CD8-positive, alpha-beta T cell (primary cell): ENCODE measurements at regions of chr22 and their contacts with region 1.

Region 1: GRCh38 chr22:22787786-22788459 is 99.7 kb upstream of the IGLL5 start:
- DNase-seq: peak; percentile 35 to 86 (median 75)
- ATAC-seq: peak; percentile 80
- H3K4me3 ChIP-seq: no peak overlapping the region
- H3K4me3 Mint-ChIP-seq: no peak overlapping the region
- H3K27ac ChIP-seq: peak overlapping the region in 1 of 2 experiments; percentile 69
- H3K27ac Mint-ChIP-seq: peak overlapping the region; percentile 85
- H3K4me1 ChIP-seq: peaks cover 38% of the 10 kb centered on the region
- H3K4me1 Mint-ChIP-seq: peaks cover 54% of the 10 kb centered on the region
- H3K27me3 ChIP-seq: no peaks in the 10 kb centered on the region
- H3K27me3 Mint-ChIP-seq: no peaks in the 10 kb centered on the region
- CTCF ChIP-seq: peak; percentile 78

Region 2: DNA sequence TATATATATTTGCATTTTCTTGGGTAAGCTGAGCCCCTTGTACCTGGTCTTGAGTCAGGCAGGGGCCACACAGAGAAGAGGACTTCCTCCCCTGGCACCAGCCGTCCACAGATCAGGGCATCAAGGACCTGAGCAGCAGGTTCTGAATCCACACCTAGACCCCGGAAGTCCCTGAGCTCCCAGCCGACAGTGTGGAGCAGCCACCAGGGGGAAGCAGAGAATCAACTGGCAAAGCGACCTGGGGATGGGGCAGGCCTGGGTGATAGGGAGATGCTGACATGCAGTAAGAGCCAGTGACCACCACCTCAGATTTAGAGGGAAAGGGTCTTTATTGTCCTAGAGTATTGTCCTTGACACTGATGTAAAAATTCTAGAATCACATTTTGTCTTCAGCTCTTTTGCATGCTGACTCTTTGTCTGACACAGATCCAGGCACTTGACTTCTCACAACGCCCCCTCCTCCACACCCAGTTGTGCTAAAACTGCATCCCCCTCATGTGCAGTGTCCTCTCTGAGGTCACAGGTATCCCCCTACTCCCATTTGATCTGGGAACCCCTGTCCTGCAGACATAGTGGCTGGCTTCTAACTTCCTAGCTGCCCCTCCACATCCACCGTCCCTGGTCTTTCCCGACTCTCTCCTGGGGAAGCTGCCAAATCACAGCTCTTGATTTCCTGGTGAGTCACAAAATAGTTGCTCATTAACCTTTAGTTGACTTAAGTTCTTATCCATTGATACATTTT is 34.2 kb before region 1 on chr22:
- CTCF ChIA-PET with region 1: interaction called, 153 read pairs
- POLR2A ChIA-PET with region 1: interaction called, 10 read pairs
- intact Hi-C with region 1: loop called in 1 of 2 experiments (anchors 5 kb)
- DNase-seq: peak; percentile 63 to 90 (median 83)
- ATAC-seq: peak; percentile 85
- H3K4me3 ChIP-seq: peak overlapping the region in 1 of 2 experiments; percentile 25
- H3K4me3 Mint-ChIP-seq: peak overlapping the region; percentile 60
- H3K27ac ChIP-seq: peak overlapping the region; percentile 44 to 69
- H3K27ac Mint-ChIP-seq: peak overlapping the region; percentile 94
- H3K4me1 ChIP-seq: peaks cover 44% of the 10 kb centered on the region
- H3K4me1 Mint-ChIP-seq: peaks cover 66% of the 10 kb centered on the region
- H3K27me3 ChIP-seq: no peaks in the 10 kb centered on the region
- H3K27me3 Mint-ChIP-seq: no peaks in the 10 kb centered on the region
- CTCF ChIP-seq: peak; percentile 70

Region 3: DNA sequence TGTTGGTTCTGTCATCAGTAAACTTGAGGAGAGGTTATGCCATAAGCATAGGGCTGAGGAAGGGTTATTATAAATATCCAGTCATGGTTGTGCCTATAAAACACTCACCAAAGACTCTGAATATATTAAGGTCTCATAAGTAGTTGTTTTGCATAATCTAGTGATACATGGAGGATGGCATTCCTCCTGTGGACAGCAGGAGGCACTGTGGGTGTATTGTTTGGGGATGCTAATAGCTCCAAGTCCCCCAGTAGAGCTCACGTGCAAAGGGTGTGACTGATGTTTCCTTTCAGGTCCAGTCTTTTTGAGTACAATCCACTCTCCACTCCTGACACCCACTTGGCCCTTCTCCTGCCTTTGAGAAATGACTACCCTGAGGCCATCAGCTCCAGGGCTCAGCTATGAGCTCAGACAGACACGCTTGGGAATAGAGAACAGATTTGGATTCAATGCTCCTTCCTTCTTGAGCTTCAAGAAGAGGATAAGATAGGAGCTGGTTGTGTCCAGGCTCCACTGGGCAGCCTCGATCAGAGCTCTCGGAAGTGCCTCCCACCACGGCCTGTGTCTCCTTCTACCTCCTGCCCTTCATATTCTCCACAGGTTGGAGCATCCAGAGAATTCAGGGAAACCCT is 14.5 kb after region 1 on chr22:
- CTCF ChIA-PET with region 1: interaction called, 78 read pairs
- POLR2A ChIA-PET with region 1: interaction called, 3 read pairs
- intact Hi-C with region 1: loop called in 1 of 2 experiments (anchors 2 kb)
- DNase-seq: peak in 8 of 9 experiments; percentile 37 to 77 (median 58)
- ATAC-seq: peak; percentile 86
- H3K4me3 ChIP-seq: no peak overlapping the region
- H3K4me3 Mint-ChIP-seq: no peak overlapping the region
- H3K27ac ChIP-seq: no peak overlapping the region
- H3K27ac Mint-ChIP-seq: peak overlapping the region; percentile 18
- H3K4me1 ChIP-seq: no peaks in the 10 kb centered on the region
- H3K4me1 Mint-ChIP-seq: peaks cover 48% of the 10 kb centered on the region
- H3K27me3 ChIP-seq: no peaks in the 10 kb centered on the region
- H3K27me3 Mint-ChIP-seq: no peaks in the 10 kb centered on the region
- CTCF ChIP-seq: peak; percentile 80

Region 4: GRCh38 chr22:22848364-22848866 is 60.5 kb after region 1 on chr22:
- CTCF ChIA-PET with region 1: interaction called, 30 read pairs
- POLR2A ChIA-PET with region 1: no interaction called
- intact Hi-C with region 1: no loop called
- DNase-seq: peak; percentile 39 to 85 (median 72)
- ATAC-seq: peak; percentile 83
- H3K4me3 ChIP-seq: no peak overlapping the region
- H3K4me3 Mint-ChIP-seq: no peak overlapping the region
- H3K27ac ChIP-seq: no peak overlapping the region
- H3K27ac Mint-ChIP-seq: no peak overlapping the region
- H3K4me1 ChIP-seq: peaks cover 16% of the 10 kb centered on the region
- H3K4me1 Mint-ChIP-seq: peaks cover 46% of the 10 kb centered on the region
- H3K27me3 ChIP-seq: no peaks in the 10 kb centered on the region
- H3K27me3 Mint-ChIP-seq: no peaks in the 10 kb centered on the region
- CTCF ChIP-seq: peak; percentile 80

Region 5: GRCh38 chr22:22870577-22871404 is 82.9 kb after region 1 on chr22:
- CTCF ChIA-PET with region 1: interaction called, 28 read pairs
- POLR2A ChIA-PET with region 1: interaction called, 3 read pairs
- intact Hi-C with region 1: no loop called
- DNase-seq: peak in 3 of 9 experiments; percentile 29 to 47 (median 46)
- ATAC-seq: no peak
- H3K4me3 ChIP-seq: no peak overlapping the region
- H3K4me3 Mint-ChIP-seq: no peak overlapping the region
- H3K27ac ChIP-seq: no peak overlapping the region
- H3K27ac Mint-ChIP-seq: no peak overlapping the region
- H3K4me1 ChIP-seq: peaks cover 10% of the 10 kb centered on the region
- H3K4me1 Mint-ChIP-seq: peaks cover 26% of the 10 kb centered on the region
- H3K27me3 ChIP-seq: no peaks in the 10 kb centered on the region
- H3K27me3 Mint-ChIP-seq: no peaks in the 10 kb centered on the region
- CTCF ChIP-seq: no peak